ENCODE measurements at regions of chr1 and their contacts with region 1.

Region 1: GRCh38 chr1:99717005-99717404 is 49.4 kb downstream of the FRRS1 start:
- DNase-seq: no peak
- CTCF ChIP-seq: no peak

Region 2: DNA sequence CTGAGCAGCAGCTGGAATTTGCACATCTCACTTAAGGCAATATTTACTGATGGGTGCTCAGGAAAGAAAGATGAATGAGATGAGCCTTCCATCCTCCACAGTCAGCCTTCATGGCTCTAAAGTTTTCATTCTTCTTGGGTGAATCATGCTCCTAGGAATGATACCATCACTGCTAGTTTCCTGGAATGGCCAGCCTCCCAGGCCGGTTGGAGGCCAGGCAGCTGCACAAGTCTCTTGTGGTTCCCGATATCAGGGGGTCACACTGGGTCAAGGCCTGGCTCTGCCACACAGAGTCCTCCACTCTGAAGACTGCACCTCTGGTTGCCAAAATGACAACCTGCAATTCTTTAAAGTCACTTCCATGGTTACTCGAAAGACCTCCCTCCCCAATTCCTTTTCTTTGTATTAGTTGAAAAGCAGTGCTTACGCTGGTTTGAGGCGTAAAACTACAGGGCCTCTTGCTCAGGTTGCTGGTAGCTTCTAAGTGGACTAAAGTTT is 117.3 kb before region 1 on chr1:
- CTCF ChIA-PET with region 1: no interaction called
- POLR2A ChIA-PET with region 1: no interaction called
- DNase-seq: no peak
- CTCF ChIP-seq: no peak

Region 3: GRCh38 chr1:99728494-99729235 is 11.7 kb after region 1 on chr1:
- CTCF ChIA-PET with region 1: interaction called, 12 read pairs
- POLR2A ChIA-PET with region 1: no interaction called
- DNase-seq: no peak
- CTCF ChIP-seq: peak; percentile 17

Region 4: DNA sequence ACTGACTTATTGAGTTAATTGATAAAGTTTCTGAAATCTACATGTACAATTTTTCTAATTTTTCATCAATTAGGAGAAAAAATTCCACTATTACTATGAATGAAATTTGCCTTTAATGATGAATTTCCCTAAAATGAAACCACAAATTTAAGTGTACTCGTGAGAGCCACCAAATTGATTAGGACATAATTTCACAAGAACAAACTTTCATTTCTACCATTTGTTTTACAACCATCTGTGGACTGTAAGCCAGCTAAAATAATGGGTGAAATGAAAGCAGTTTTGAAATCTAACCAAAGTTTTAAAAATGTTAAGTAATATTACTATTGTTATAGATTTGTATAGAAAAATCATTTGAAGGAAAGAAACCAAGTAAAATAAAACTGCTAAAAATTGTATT is 175.0 kb after region 1 on chr1:
- CTCF ChIA-PET with region 1: no interaction called
- POLR2A ChIA-PET with region 1: no interaction called
- DNase-seq: no peak
- CTCF ChIP-seq: no peak

Region 5: DNA sequence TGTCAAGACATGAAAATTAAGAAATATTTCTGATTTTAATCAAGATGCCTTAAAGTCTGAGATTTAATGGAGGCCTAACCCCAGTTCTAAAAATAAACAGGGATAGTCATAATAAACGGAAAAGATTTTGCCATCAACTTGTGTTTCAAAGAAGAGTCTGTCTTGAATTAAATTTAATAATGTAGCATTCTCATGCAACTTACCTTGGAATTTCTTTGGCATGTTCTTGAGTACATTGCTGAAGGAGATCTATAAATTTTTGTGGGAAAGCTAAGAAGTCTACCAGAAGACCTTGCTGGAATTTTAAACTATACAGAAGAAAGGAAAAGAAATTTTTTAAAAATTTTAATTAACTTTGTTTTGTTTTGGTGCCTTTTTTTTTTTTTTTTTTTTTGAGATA is 405.2 kb after region 1 on chr1:
- CTCF ChIA-PET with region 1: no interaction called
- POLR2A ChIA-PET with region 1: no interaction called
- DNase-seq: no peak
- CTCF ChIP-seq: no peak

Measured in GM10248 (cell line).